IMR-90 (cell line): ENCODE measurements at regions of chr7 and their contacts with region 1.

Region 1: GRCh38 chr7:22854158-22855048 is 31.8 kb upstream of the TOMM7 start:
- DNase-seq: peak; percentile 89
- ATAC-seq: peak; percentile 78
- H3K4me3 ChIP-seq: peak overlapping the region; percentile 68
- H3K27ac ChIP-seq: peak overlapping the region; percentile 80
- H3K4me1 ChIP-seq: peaks cover 11% of the 10 kb centered on the region
- H3K27me3 ChIP-seq: no peaks in the 10 kb centered on the region
- CTCF ChIP-seq: no peak
- POLR2A ChIP-seq: peak; percentile 91
- RAD21 ChIP-seq: no peak; the same call in 1 of the 2 replicates

Region 2: GRCh38 chr7:22715969-22716368 is 138.4 kb before region 1 on chr7:
- CTCF ChIA-PET with region 1: no interaction called
- POLR2A ChIA-PET with region 1: interaction called, 13 read pairs
- dilution Hi-C with region 1: no loop called
- in situ Hi-C with region 1: no loop called
- intact Hi-C with region 1: no loop called
- DNase-seq: no peak
- ATAC-seq: no peak
- H3K4me3 ChIP-seq: no peak overlapping the region
- H3K27ac ChIP-seq: no peak overlapping the region
- H3K4me1 ChIP-seq: peaks cover 13% of the 10 kb centered on the region
- H3K27me3 ChIP-seq: no peaks in the 10 kb centered on the region
- CTCF ChIP-seq: no peak
- POLR2A ChIP-seq: no peak
- RAD21 ChIP-seq: no peak

Region 3: GRCh38 chr7:22765609-22766008 is 88.8 kb before region 1 on chr7:
- CTCF ChIA-PET with region 1: no interaction called
- POLR2A ChIA-PET with region 1: no interaction called
- dilution Hi-C with region 1: no loop called
- in situ Hi-C with region 1: no loop called
- intact Hi-C with region 1: no loop called
- DNase-seq: no peak
- ATAC-seq: no peak
- H3K4me3 ChIP-seq: no peak overlapping the region
- H3K27ac ChIP-seq: no peak overlapping the region
- H3K4me1 ChIP-seq: no peaks in the 10 kb centered on the region; the same call in 1 of the 2 replicates
- H3K27me3 ChIP-seq: no peaks in the 10 kb centered on the region
- CTCF ChIP-seq: no peak
- POLR2A ChIP-seq: no peak
- RAD21 ChIP-seq: no peak

Region 4: DNA sequence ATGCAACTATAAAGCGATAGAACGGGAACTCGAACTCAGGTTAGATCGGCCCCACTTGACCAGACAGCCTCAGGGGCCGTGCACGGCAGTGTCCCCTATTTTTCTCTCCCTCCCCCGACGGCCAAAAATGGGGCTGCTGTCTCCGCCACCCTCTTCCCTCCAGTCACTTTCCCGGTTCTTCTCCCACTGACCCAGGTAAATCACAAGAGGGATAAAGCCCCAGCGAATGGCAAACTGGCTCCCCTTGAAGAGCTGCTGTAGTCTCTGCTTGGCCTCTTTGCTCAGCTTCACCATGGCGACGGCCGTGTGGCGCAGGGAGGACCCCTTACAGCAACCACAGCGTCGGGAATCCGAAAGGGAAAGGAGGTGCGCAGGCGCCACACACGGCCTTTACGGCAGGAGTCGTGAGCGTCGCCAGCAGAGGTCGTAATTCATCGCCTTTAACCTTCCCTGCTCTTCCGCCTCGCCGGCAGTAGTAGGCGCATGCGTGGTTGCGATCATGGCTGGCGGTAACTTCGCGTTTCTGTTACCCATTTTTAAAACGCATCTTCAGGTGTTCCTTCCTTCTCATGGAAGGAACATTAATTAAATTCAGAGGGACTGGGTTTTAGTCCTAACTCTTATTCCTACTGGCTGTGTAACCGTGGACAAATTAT is 31.8 kb before region 1 on chr7 and contains the start of gene TOMM7:
- CTCF ChIA-PET with region 1: no interaction called
- POLR2A ChIA-PET with region 1: no interaction called
- dilution Hi-C with region 1: no loop called
- in situ Hi-C with region 1: no loop called
- intact Hi-C with region 1: loop called (anchors 2 kb)
- DNase-seq: peak; percentile 97
- ATAC-seq: peak; percentile 93
- H3K4me3 ChIP-seq: peak within 1 kb of the TSS; percentile 82
- H3K27ac ChIP-seq: peak within 1 kb of the TSS; percentile 88
- H3K4me1 ChIP-seq: peaks cover 5% of the 10 kb centered on the region
- H3K27me3 ChIP-seq: no peaks in the 10 kb centered on the region
- CTCF ChIP-seq: peak; percentile 53
- POLR2A ChIP-seq: peak; percentile 86
- RAD21 ChIP-seq: peak; percentile 52
- total RNA-seq, gene TOMM7: 67.2 and 125 TPM in 2 replicates

Region 5: DNA sequence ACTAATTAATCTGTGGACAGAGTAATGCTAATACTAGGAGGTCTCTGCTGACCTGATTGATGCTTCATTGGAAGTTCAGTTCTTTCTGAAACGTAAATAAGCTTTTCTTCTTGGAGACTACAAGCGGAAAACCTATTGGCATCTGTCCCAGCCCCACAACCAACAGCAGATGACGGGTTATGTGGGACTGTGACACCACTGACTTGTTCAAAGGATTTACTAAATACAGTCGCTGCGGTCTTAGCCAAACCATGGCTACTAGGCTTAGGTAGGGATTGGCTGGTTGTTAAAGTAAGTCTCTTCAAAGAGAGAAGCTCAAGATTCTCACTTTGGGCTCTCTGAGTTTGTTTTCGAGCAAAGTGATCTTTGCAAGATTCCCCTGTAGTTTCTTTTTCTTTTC is 91.2 kb after region 1 on chr7:
- CTCF ChIA-PET with region 1: no interaction called
- POLR2A ChIA-PET with region 1: no interaction called
- dilution Hi-C with region 1: no loop called
- in situ Hi-C with region 1: no loop called
- intact Hi-C with region 1: loop called (anchors 5 kb)
- DNase-seq: peak; percentile 63
- ATAC-seq: no peak
- H3K4me3 ChIP-seq: no peak overlapping the region
- H3K27ac ChIP-seq: no peak overlapping the region; the same call in 1 of the 2 replicates
- H3K4me1 ChIP-seq: peaks cover 6% of the 10 kb centered on the region; the same call in 1 of the 2 replicates
- H3K27me3 ChIP-seq: no peaks in the 10 kb centered on the region
- CTCF ChIP-seq: no peak
- POLR2A ChIP-seq: no peak
- RAD21 ChIP-seq: no peak

Region 6: GRCh38 chr7:23013715-23014649 is 159.6 kb after region 1 on chr7 and contains the start of gene HYCC1:
- CTCF ChIA-PET with region 1: no interaction called
- POLR2A ChIA-PET with region 1: no interaction called
- dilution Hi-C with region 1: no loop called
- in situ Hi-C with region 1: no loop called
- intact Hi-C with region 1: loop called (anchors 2 kb)
- DNase-seq: peak; percentile 99
- ATAC-seq: peak; percentile 99
- H3K4me3 ChIP-seq: peak within 1 kb of the TSS; percentile 66
- H3K27ac ChIP-seq: peak within 1 kb of the TSS; percentile 77
- H3K4me1 ChIP-seq: peaks cover 7% of the 10 kb centered on the region; the same call in 1 of the 2 replicates
- H3K27me3 ChIP-seq: no peaks in the 10 kb centered on the region
- CTCF ChIP-seq: peak; percentile 53
- POLR2A ChIP-seq: peak; percentile 96
- RAD21 ChIP-seq: peak; percentile 40
- total RNA-seq, gene HYCC1: 78.3 and 185 TPM in 2 replicates